RWPE1 (cell line): ENCODE measurements at regions of chr11 and their contacts with region 1.

Region 1: GRCh38 chr11:57703341-57703740 is 8.7 kb downstream of the MED19 start:
- DNase-seq: no peak
- H3K27ac ChIP-seq: no peak overlapping the region
- CTCF ChIP-seq: no peak

Region 2: GRCh38 chr11:57735619-57736298 is 32.4 kb after region 1 on chr11:
- CTCF ChIA-PET with region 1: interaction called, 3 read pairs
- POLR2A ChIA-PET with region 1: interaction called, 11 read pairs
- DNase-seq: no peak
- H3K27ac ChIP-seq: no peak overlapping the region
- CTCF ChIP-seq: no peak